Right ventricle myocardium superior (tissue), 1 donor: ENCODE measurements at regions of chr3 and their contacts with region 1.

Region 1: GRCh38 chr3:157618075-157618760 is 115.0 kb upstream of the VEPH1 start:
- DNase-seq: no peak
- ATAC-seq: peak; percentile 68

Region 2: DNA sequence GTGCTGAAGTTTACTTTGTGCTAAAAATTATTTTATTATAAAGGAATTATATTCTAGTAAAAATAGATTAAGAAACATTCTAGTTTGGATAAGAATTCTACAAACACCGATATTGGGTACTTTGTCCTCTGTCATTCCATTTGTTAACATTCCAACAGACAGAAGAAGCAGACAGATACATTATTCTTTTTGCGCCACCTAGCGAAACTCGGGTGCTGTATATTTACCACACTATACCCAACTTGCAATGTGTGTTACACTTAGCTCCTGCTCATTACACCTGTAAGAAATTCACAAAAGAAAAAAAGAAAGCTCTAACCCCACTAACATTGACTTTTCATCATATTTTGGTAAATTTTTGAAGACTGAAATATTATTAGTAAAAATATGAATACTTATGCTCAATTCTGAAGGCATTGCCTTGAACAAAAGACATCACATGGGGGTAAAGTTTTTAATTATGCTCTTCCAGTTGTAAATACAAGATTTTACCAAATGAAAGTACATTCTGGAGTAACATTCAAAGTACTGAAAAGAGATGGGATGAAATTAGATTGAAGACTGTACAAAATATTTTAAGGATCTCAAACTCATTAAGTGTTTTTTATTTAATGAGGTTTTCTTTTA is 816.3 kb after region 1 on chr3:
- intact Hi-C with region 1: loop called (anchors 5 kb)
- DNase-seq: peak; percentile 41
- ATAC-seq: peak; percentile 90

Region 3: DNA sequence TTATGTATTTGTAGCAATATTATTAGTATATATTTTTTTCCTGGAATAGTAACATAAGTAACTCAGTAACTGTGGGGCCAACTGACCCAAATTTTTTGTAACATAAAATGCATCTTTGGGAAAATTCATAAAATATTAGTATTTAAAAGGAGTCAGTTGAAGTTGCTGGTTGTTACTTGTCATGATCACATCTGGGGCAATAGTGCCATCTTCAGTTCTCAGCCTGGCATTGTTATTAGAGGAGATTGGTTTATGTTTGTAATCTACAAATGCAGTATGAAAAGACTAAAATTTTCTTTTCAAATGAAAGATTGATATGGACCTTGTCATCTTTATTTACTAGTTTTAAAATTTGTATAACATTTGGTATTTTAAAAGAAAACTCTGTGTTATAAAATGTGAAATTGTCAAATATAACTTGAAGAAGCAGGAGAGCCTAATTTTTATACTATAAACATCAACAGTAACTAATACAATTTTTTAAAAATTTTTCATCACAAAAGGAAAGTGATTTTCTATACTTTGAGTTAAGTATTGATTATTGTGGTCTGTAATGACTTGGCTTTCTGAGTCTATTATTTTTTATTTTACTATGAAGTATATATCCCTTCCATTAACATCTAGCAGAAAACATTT is 914.0 kb after region 1 on chr3:
- intact Hi-C with region 1: loop called (anchors 5 kb)
- DNase-seq: no peak
- ATAC-seq: no peak